ENCODE measurements at regions of chr7 and their contacts with region 1.

Region 1: GRCh38 chr7:50595491-50596102 is 30.4 kb upstream of the DDC start:
- DNase-seq: peak in 6 of 10 donors; percentile 17 to 69 (median 38)
- H3K4me3 ChIP-seq: no peak overlapping the region
- H3K27ac ChIP-seq: peak overlapping the region in 1 of 59 donors; percentile 31
- H3K27me3 ChIP-seq: no peaks in the 10 kb centered on the region
- CTCF ChIP-seq: peak in 52 of 56 donors; percentile 13 to 66 (median 41)

Region 2: GRCh38 chr7:50467817-50468610 is 127.6 kb before region 1 on chr7:
- intact Hi-C with region 1: loop called in 1 of 2 experiments (anchors 5 kb)
- DNase-seq: peak; percentile 73 to 87 (median 84)
- H3K4me3 ChIP-seq: peak overlapping the region in 46 of 59 donors; percentile 5 to 61 (median 32)
- H3K27ac ChIP-seq: peak overlapping the region in 5 of 59 donors; percentile 3 to 28 (median 13)
- H3K27me3 ChIP-seq: no peaks in the 10 kb centered on the region
- CTCF ChIP-seq: peak; percentile 75 to 97 (median 90)

Region 3: GRCh38 chr7:50632561-50633413 is 37.2 kb after region 1 on chr7:
- intact Hi-C with region 1: loop called in 1 of 2 experiments (anchors 5 kb)
- DNase-seq: no peak
- H3K4me3 ChIP-seq: no peak overlapping the region
- H3K27ac ChIP-seq: no peak overlapping the region
- H3K27me3 ChIP-seq: no peaks in the 10 kb centered on the region
- CTCF ChIP-seq: peak; percentile 28 to 73 (median 64)

Measured in dorsolateral prefrontal cortex (tissue), 120 donors.